Posterior vena cava (tissue), 2 donors: ENCODE measurements at regions of chr2 and their contacts with region 1.

Region 1: DNA sequence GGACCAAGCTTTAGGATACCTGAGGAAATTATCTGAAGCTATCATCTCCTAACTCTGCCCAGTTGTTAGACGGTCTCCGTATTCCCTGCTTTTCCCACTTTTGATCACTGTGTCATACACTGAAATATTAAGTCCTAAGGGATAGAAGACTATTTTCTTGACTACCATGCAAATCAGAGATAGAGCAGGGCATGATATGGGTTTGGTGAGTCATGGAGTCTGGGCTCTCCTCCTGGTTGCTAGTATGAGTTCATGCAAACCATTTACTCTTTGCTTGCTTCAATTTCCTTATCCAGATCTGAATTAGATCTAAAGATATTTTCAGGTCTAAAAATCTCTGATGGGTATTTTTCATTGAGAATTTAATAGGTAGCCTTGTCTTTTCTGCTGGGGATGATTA is 55.0 kb downstream of the EHBP1 start:
- DNase-seq: no peak

Region 2: DNA sequence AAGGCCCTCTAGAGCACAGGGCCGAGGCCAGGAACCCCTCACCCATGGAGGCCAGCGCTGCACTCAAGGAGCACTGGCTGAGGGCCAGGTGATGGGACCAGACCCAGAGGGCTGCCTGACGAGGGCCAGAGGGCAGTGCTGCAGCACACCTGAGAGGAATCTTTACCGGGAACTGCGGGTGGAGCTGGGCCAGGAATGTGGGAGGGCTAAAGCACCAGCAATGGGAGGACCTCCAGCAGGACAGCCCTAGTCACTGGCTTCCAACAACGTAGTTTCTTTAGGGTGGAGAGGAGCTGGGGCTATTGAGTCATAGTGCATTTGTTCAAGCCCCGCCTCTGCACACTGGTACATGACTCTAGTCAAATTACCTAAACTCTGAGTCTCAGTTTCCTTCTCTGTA is 398.0 kb before region 1 on chr2:
- intact Hi-C with region 1: no loop called
- DNase-seq: no peak

Region 3: DNA sequence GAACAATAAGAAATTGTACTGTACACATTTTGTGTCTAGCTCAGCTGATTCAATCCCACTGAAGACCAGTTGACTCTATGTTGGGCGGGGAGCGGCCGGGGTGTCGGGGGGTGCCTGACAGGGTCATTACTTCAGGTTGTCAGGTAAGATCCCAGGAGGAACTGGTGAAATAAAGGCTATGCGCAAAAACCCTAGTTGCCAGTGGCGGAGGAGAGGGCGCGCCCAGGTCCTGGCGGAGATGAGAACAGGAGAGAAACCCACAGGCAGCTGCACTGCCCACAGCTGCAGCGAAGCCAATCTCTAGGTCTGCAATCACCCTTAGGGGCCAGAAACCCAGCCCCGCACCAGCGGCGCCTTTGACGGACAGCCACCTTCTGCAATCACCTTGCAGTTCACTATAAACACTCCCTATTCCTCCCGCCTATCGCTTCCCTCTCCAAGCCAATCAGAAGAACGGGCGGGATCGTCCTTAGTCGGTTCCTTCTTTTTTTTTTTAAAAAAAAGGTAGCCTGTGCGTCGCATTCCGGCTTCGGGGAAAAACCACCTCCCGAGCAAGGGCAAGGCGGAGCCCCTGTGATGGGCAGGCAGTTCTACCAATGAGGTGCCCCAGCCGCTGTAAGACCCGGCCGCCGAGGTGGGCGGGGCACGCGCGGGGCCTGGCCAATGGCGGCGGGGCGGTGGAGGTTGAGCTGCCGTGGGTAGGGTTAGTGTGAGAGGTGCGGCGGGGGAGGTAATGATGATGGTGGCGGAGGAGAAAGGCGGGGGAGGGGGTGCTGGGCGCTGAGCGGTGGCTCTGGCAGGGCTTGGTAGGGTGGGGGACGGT is 55.3 kb before region 1 on chr2 and contains the start of gene EHBP1:
- intact Hi-C with region 1: loop called in 1 of 2 experiments (anchors 10 kb)
- DNase-seq: peak; percentile 100
- total RNA-seq, gene EHBP1: 64.6 to 67.6 TPM